ENCODE measurements at regions of chr19 and their contacts with region 1.

Region 1: DNA sequence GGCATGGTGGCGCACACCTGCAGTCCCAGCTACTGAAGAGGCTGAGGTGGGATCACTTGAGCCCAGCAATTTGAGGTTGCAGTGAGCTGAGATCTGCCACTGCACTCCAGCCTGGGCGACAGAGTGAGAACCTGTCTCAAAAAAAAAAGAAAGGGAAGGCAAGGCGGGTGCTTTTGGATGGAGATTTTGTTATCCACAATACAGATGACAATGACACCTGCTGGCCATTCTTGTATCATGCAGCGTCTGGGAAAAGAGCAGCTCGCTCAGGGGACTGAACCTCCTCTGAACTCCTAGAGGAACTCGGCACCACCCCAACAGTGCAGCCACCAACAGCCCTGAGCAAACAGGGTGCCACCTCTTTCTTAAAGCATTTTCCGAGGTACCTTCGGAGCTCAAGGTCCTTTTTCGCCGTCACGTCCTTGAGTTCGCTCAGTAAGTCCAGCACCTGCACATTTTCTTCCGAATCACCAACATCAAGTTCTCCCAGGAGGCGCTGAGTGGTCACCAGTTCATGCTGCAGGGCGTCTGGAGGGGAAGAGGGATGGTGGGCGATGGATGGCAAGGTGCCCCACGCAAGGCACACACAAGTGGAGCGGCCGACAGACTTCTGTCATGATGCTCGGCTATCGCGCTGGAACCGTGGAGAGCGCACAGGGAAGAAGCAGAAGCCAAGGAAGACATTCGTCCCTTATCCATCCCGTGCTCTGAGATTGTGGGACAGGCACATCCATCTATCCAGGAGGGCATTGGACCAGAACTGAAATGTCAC is 22.6 kb downstream of the HAUS8 start:
- DNase-seq: no peak
- H3K4me3 ChIP-seq: no peak overlapping the region
- CTCF ChIP-seq: peak; percentile 49

Region 2: DNA sequence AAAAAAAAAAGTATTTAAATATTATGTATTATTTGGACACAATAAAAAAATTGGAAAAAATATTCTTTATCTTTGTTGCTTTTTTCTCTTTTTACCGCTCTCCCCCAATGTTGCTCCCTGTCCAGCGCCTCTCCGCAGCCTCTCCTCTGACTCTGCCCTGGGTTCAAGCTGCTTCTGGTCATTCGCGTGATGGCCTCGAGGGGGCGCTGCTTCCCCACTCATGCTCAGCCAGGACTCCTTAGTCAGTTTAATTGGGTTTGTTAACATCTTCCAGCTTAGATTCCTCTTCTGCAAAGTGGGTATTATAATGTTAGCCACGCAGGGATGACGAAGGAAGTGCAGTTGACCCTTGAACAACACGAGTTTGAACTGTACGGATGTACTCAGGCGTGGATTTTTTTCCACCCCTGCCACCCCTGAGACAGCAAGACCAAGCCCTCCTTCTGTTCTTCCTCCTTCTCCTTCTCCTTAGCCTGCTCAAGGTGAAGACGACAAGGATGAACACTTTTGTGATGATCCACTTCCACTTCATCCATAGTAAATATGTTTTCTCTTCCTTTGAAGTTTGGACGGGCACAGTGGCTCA is 337.8 kb before region 1 on chr19:
- CTCF ChIA-PET with region 1: interaction called, 15 read pairs
- POLR2A ChIA-PET with region 1: no interaction called
- DNase-seq: no peak
- H3K4me3 ChIP-seq: no peak overlapping the region
- CTCF ChIP-seq: peak; percentile 80

Region 3: GRCh38 chr19:16771618-16772017 is 281.0 kb before region 1 on chr19:
- CTCF ChIA-PET with region 1: interaction called, 147 read pairs
- POLR2A ChIA-PET with region 1: no interaction called
- DNase-seq: peak; percentile 14
- H3K4me3 ChIP-seq: no peak overlapping the region
- CTCF ChIP-seq: peak; percentile 86

Region 4: GRCh38 chr19:16778796-16779411 is 273.7 kb before region 1 on chr19:
- CTCF ChIA-PET with region 1: interaction called, 147 read pairs
- POLR2A ChIA-PET with region 1: no interaction called
- DNase-seq: no peak
- H3K4me3 ChIP-seq: no peak overlapping the region
- CTCF ChIP-seq: peak; percentile 77

Region 5: DNA sequence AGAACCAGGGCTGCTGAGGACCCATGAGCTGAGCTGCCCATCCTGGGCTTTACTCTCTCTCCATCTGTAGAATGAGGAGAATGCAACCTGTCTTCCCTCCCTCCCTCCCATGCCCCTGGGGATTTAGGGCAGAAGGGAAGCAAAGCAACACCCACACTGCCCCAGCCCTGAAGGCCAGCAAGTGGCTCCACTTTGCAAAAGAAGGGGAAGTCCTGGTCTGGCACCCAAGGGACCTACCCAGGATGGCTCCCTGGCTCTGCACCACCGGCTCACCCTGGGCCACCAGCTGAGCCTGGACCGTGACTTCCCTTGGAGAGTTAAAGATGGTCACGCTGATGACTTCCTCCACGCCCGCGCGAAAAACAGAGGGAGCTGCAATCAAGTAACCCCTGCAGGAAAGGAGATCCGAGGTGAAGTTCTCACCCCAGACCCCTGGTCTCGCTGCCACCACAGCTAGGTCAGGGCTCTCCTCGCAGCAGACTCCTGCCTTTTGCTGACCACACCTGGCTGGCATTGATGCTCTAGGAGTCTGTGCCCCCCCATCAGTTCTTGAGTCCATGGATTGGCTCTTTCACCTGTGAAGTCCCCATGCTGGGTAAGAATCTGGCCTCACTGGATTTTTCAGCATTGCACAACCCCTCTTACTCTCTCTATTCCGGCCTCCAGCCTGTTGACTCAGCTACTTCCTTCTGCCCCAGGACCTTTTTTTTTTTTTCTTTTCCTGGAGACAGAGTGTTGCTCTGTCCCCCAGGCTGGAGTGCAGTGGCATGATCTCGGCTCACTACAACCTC is 30.6 kb before region 1 on chr19:
- CTCF ChIA-PET with region 1: no interaction called
- POLR2A ChIA-PET with region 1: no interaction called
- DNase-seq: no peak
- H3K4me3 ChIP-seq: no peak overlapping the region
- CTCF ChIP-seq: no peak